Endothelial cell of umbilical vein (primary cell): ENCODE measurements at regions of chr12 and their contacts with region 1.

Region 1: GRCh38 chr12:51217968-51218606 is at the start of gene POU6F1:
- DNase-seq: peak; percentile 85
- H3K4me3 ChIP-seq: peak within 1 kb of the TSS; percentile 64 to 89 (median 69)
- H3K27ac ChIP-seq: peak within 1 kb of the TSS; percentile 70
- H3K4me1 ChIP-seq: peaks cover 16% of the 10 kb centered on the region
- H3K27me3 ChIP-seq: no peaks in the 10 kb centered on the region
- CTCF ChIP-seq: peak; percentile 20 to 68
- POLR2A ChIP-seq: peak; percentile 16
- total RNA-seq, gene POU6F1: 14.4 and 17.5 TPM in 2 replicates

Region 2: GRCh38 chr12:51083126-51083833 is 134.8 kb before region 1 on chr12 and contains the start of gene CSRNP2:
- CTCF ChIA-PET with region 1: no interaction called
- POLR2A ChIA-PET with region 1: interaction called, 9 read pairs
- dilution Hi-C with region 1: no loop called
- intact Hi-C with region 1: loop called (anchors 5 kb)
- DNase-seq: peak; percentile 94
- H3K4me3 ChIP-seq: peak within 1 kb of the TSS; percentile 77 to 98 (median 78)
- H3K27ac ChIP-seq: peak within 1 kb of the TSS; percentile 64
- H3K4me1 ChIP-seq: peaks cover 12% of the 10 kb centered on the region
- H3K27me3 ChIP-seq: no peaks in the 10 kb centered on the region
- CTCF ChIP-seq: peak in 1 of 2 donors; percentile 19
- POLR2A ChIP-seq: peak; percentile 100
- total RNA-seq, gene CSRNP2: 42.1 and 49.7 TPM in 2 replicates

Region 3: GRCh38 chr12:51172515-51173431 is 45.3 kb before region 1 on chr12 and contains the start of gene TFCP2:
- CTCF ChIA-PET with region 1: no interaction called
- POLR2A ChIA-PET with region 1: interaction called, 4 read pairs
- dilution Hi-C with region 1: no loop called
- intact Hi-C with region 1: loop called (anchors 1 kb)
- DNase-seq: peak; percentile 97
- H3K4me3 ChIP-seq: peak within 1 kb of the TSS; percentile 61 to 93 (median 80)
- H3K27ac ChIP-seq: peak within 1 kb of the TSS; percentile 67
- H3K4me1 ChIP-seq: peaks cover 10% of the 10 kb centered on the region
- H3K27me3 ChIP-seq: no peaks in the 10 kb centered on the region
- CTCF ChIP-seq: no peak
- POLR2A ChIP-seq: peak; percentile 36
- total RNA-seq, gene TFCP2: 24.9 and 28.6 TPM in 2 replicates

Region 4: DNA sequence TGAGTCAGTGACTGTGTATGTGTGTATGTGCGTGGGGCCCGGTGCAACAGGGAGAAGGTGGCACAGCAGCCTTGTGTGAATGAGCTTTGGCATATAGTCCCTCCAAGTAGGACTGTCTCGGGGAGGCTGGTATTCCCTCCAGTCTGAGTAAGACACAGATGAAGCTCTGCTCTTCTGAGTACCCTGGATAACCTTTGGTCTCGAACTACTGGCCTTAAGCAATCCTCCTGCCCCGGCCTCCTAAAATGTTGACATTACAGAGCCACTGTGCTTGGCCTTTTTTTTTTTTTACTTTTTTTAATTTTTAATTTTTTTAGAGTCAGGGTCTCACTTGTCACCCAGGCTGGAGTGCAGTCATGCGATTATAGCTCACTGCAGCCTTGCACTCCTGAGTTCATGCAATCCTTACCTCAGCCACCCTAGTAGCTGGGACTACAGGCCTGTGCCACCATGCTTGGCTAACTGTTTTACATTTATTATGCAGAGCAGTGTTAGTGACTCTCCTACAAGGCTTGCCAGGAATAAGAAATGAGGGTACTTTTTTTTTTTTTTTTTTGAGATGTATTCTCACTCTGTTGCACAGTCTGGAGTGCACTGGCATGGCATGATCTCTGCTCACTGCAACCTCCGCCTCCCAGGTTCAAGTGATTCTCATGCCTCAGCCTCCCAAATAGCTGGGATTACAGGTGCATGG is 11.2 kb after region 1 on chr12:
- CTCF ChIA-PET with region 1: interaction called, 10 read pairs
- POLR2A ChIA-PET with region 1: no interaction called
- dilution Hi-C with region 1: no loop called
- intact Hi-C with region 1: no loop called
- DNase-seq: no peak
- H3K4me3 ChIP-seq: no peak overlapping the region
- H3K27ac ChIP-seq: no peak overlapping the region
- H3K4me1 ChIP-seq: no peaks in the 10 kb centered on the region
- H3K27me3 ChIP-seq: no peaks in the 10 kb centered on the region
- CTCF ChIP-seq: no peak
- POLR2A ChIP-seq: no peak

Region 5: GRCh38 chr12:51238510-51239334 is 20.6 kb after region 1 on chr12 and contains the start of gene DAZAP2:
- CTCF ChIA-PET with region 1: interaction called, 6 read pairs
- POLR2A ChIA-PET with region 1: interaction called, 4 read pairs
- dilution Hi-C with region 1: no loop called
- intact Hi-C with region 1: loop called (anchors 2 kb)
- DNase-seq: peak; percentile 96
- H3K4me3 ChIP-seq: peak within 1 kb of the TSS; percentile 11 to 97 (median 66)
- H3K27ac ChIP-seq: peak within 1 kb of the TSS; percentile 85
- H3K4me1 ChIP-seq: peaks cover 12% of the 10 kb centered on the region
- H3K27me3 ChIP-seq: no peaks in the 10 kb centered on the region
- CTCF ChIP-seq: peak in 1 of 2 donors; percentile 31
- POLR2A ChIP-seq: peak; percentile 93
- total RNA-seq, gene DAZAP2: 177 TPM in 2 replicates

Region 6: DNA sequence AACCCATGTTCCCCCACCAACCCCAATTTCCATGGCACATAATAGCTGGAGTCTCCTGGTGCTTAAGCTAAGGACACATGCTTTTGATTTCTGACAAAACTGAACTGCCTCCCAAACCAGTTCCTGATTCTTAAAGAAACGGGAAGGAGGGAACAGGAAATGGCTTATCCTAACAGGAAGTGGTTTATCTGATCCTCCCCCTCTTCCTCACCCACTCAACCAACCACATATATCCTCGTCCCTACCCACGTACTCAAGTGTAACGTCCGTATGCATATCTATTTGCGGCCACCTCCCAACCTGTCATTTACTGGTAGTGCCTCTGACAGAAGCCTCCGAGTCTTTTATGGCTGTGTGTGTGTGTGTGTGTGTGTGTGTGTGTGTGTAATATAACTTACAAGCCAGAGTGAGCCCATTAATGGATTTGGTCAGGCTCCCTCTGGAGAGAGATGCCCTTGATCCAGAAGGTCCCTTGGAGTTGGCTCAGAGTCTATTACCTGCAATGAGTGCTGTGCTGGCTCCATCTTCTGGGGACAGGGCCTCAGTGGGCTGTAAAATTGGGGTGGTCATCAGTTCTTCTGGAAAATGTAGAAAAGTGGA is 28.3 kb after region 1 on chr12:
- CTCF ChIA-PET with region 1: interaction called, 6 read pairs
- POLR2A ChIA-PET with region 1: interaction called, 12 read pairs
- dilution Hi-C with region 1: no loop called
- intact Hi-C with region 1: no loop called
- DNase-seq: peak; percentile 49
- H3K4me3 ChIP-seq: no peak overlapping the region
- H3K27ac ChIP-seq: peak overlapping the region; percentile 10
- H3K4me1 ChIP-seq: peaks cover 22% of the 10 kb centered on the region
- H3K27me3 ChIP-seq: no peaks in the 10 kb centered on the region
- CTCF ChIP-seq: peak in 1 of 2 donors; percentile 4
- POLR2A ChIP-seq: no peak

Region 7: GRCh38 chr12:51270067-51270970 is 52.2 kb after region 1 on chr12 and contains the start of gene SMAGP:
- CTCF ChIA-PET with region 1: interaction called, 12 read pairs
- POLR2A ChIA-PET with region 1: interaction called, 6 read pairs
- dilution Hi-C with region 1: no loop called
- intact Hi-C with region 1: loop called (anchors 5 kb)
- DNase-seq: peak; percentile 26
- H3K4me3 ChIP-seq: peak within 1 kb of the TSS; percentile 45 to 92 (median 76)
- H3K27ac ChIP-seq: peak within 1 kb of the TSS; percentile 65
- H3K4me1 ChIP-seq: peaks cover 19% of the 10 kb centered on the region
- H3K27me3 ChIP-seq: no peaks in the 10 kb centered on the region
- CTCF ChIP-seq: no peak
- POLR2A ChIP-seq: no peak
- total RNA-seq, gene SMAGP: 26.2 and 29.1 TPM in 2 replicates